Tibial artery (tissue), 4 donors: ENCODE measurements at regions of chr2 and their contacts with region 1.

Region 1: GRCh38 chr2:178796079-178796677 is 11.0 kb downstream of the TTN start:
- DNase-seq: no peak
- H3K4me3 ChIP-seq: no peak overlapping the region
- H3K27ac ChIP-seq: no peak overlapping the region
- H3K4me1 ChIP-seq: no peaks in the 10 kb centered on the region
- H3K27me3 ChIP-seq: no peaks in the 10 kb centered on the region
- CTCF ChIP-seq: peak; percentile 69 to 71

Region 2: GRCh38 chr2:178914259-178914849 is 118.2 kb after region 1 on chr2:
- intact Hi-C with region 1: loop called (anchors 2 kb)
- DNase-seq: peak; percentile 84 to 87
- H3K4me3 ChIP-seq: no peak overlapping the region
- H3K27ac ChIP-seq: no peak overlapping the region
- H3K4me1 ChIP-seq: no peaks in the 10 kb centered on the region
- H3K27me3 ChIP-seq: no peaks in the 10 kb centered on the region
- CTCF ChIP-seq: peak; percentile 79 to 88